H1 (cell line): ENCODE measurements at regions of chrX and their contacts with region 1.

Region 1: GRCh38 chrX:132365490-132365889 is 123.3 kb downstream of the MBNL3 start:
- DNase-seq: no peak
- H3K4me3 ChIP-seq: no peak overlapping the region
- H3K27ac ChIP-seq: no peak overlapping the region
- H3K4me1 ChIP-seq: peaks cover 0 to 4% (median 1%) of the 10 kb centered on the region in 4 experiments; a peak in 3 of 7 replicates
- H3K27me3 ChIP-seq: peaks cover 12 to 44% (median 31%) of the 10 kb centered on the region in 4 experiments
- CTCF ChIP-seq: no peak
- EP300 ChIP-seq: no peak
- POLR2A ChIP-seq: no peak
- RAD21 ChIP-seq: no peak

Region 2: GRCh38 chrX:132375934-132376333 is 10.4 kb after region 1 on chrX:
- CTCF ChIA-PET with region 1: interaction called, 10 read pairs
- POLR2A ChIA-PET with region 1: no interaction called
- DNase-seq: no peak
- H3K4me3 ChIP-seq: no peak overlapping the region
- H3K27ac ChIP-seq: no peak overlapping the region
- H3K4me1 ChIP-seq: no peaks in the 10 kb centered on the region
- H3K27me3 ChIP-seq: no peaks in the 10 kb centered on the region
- CTCF ChIP-seq: peak in 2 of 3 experiments; percentile 9 to 10; a peak in 2 of 4 replicates
- EP300 ChIP-seq: no peak
- POLR2A ChIP-seq: no peak
- RAD21 ChIP-seq: peak in 1 of 2 experiments; percentile 9; a peak in 1 of 4 replicates